Dorsolateral prefrontal cortex (tissue), 120 donors: ENCODE measurements at regions of chr6 and their contacts with region 1.

Region 1: GRCh38 chr6:36546920-36547645 is at the start of gene STK38:
- DNase-seq: peak; percentile 72 to 91 (median 84)
- H3K4me3 ChIP-seq: peak within 1 kb of the TSS; percentile 58 to 100 (median 96)
- H3K27ac ChIP-seq: peak within 1 kb of the TSS; percentile 88 to 100 (median 97)
- H3K27me3 ChIP-seq: no peaks in the 10 kb centered on the region
- CTCF ChIP-seq: peak in 39 of 56 donors; percentile 3 to 63 (median 37)
- total RNA-seq, gene STK38: 6.3 to 23.4 (median 13.6) TPM

Region 2: DNA sequence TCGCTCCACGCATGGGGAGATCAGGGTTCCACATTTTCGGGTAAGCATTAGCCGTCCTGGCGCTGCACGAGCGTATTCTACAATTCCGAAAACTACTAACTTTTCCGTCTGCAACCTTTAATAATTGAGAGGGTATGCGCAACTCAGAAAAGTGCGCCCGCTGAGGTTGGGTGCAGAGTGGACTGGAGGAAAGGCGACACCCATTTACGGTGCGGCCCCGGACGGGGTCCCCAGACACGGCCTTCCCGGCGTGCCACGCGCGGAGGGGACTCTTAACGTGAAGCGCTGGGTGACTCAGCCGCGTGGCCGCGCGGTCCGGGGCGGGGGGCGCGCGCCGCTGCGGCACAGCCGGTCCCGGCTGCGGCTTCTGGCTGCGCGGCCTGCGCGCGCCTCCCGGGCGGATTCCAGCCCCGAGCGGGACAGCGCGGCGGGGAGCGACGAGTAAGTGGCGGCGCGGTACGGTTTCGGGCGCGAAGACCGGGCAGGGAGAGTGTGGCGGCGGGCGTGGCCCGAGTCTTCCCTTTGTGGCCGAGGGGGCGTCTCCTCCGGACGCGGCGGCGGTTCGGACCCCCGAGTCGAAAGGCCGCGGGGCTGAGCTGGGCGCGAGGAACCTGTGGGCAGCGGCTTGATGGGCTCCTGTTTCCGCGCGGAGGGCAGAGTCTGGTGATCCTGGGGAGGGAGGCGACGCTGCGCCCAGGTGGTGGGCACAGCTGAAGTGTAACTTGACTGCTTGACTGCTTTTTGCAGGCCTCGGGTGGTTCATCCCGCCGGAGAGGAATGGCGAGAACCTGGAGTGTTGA is 104.2 kb before region 1 on chr6 and contains the starts of genes KCTD20 and PXT1:
- intact Hi-C with region 1: loop called (anchors 2 to 5 kb)
- DNase-seq: peak; percentile 77 to 92 (median 87)
- H3K4me3 ChIP-seq: peak within 1 kb of the TSS; percentile 74 to 99 (median 92)
- H3K27ac ChIP-seq: peak within 1 kb of the TSS; percentile 68 to 99 (median 96)
- H3K27me3 ChIP-seq: no peaks in the 10 kb centered on the region
- CTCF ChIP-seq: peak in 24 of 56 donors; percentile 7 to 57 (median 24)
- total RNA-seq, gene KCTD20: 25.8 to 51.1 (median 35.6) TPM
- total RNA-seq, gene PXT1: 0.17 to 1.1 (median 0.34) TPM in 51 of 120 experiments, not detected in the others